Mammary epithelial cell (primary cell): ENCODE measurements at regions of chr19 and their contacts with region 1.

Region 1: GRCh38 chr19:3710265-3710812 is 2.2 kb downstream of the TJP3 start:
- DNase-seq: peak; percentile 64
- H3K4me3 ChIP-seq: no peak overlapping the region
- H3K27ac ChIP-seq: no peak overlapping the region
- H3K4me1 ChIP-seq: peaks cover 13% of the 10 kb centered on the region
- H3K27me3 ChIP-seq: no peaks in the 10 kb centered on the region
- CTCF ChIP-seq: no peak

Region 2: DNA sequence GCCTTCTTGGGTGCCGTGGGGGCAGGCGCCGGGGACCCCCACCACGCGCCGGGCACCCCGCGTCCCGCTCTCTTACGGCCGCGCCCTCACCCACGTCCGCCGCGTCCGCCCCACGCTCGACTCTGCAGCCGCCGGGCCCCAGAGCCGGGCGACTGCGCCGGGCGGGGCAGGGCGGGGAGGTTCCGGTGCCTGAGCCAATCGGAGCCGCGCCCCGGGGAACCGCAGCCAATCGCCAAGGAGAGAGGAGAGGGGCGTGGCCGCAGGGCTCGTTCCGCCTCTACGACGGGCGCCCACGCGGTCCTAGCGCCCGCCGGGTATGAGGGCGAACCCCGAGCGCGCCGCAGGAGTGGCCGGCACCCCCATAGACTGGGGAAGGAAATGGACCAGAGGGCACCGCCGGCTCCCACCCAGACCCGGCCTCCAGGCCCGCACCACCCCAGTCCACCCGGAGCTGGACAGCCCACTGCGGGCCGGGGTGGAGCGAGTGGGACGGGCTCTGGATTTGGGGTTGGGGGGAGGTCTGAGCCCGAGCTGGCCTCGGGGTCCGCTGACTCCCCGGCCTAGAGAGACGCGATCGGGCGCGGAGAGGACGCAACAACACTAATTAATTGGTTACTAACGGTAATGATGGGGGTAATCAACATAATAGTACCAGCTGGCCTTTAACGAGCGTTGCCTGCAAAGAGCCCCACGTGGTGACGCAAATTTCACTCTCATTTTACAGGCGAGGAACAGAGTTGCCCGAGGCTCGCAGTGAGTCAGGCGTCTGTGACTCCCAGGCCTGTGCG is 152.7 kb before region 1 on chr19 and contains the start of gene MFSD12:
- CTCF ChIA-PET with region 1: no interaction called
- dilution Hi-C with region 1: no loop called
- in situ Hi-C with region 1: no loop called
- intact Hi-C with region 1: loop called (anchors 1 kb)
- DNase-seq: peak; percentile 90
- H3K4me3 ChIP-seq: peak within 1 kb of the TSS; percentile 82 to 93 (median 83)
- H3K27ac ChIP-seq: peak within 1 kb of the TSS; percentile 57
- H3K4me1 ChIP-seq: peaks cover 23% of the 10 kb centered on the region
- H3K27me3 ChIP-seq: no peaks in the 10 kb centered on the region
- CTCF ChIP-seq: no peak
- total RNA-seq, gene MFSD12: 113 to 267 TPM

Region 3: GRCh38 chr19:3665681-3666544 is 44.4 kb before region 1 on chr19:
- CTCF ChIA-PET with region 1: no interaction called
- dilution Hi-C with region 1: no loop called
- in situ Hi-C with region 1: no loop called
- intact Hi-C with region 1: loop called (anchors 2 kb)
- DNase-seq: peak; percentile 14
- H3K4me3 ChIP-seq: no peak overlapping the region
- H3K27ac ChIP-seq: no peak overlapping the region
- H3K4me1 ChIP-seq: peaks cover 22% of the 10 kb centered on the region
- H3K27me3 ChIP-seq: no peaks in the 10 kb centered on the region
- CTCF ChIP-seq: peak; percentile 72 to 90